ENCODE measurements at regions of chr2 and their contacts with region 1.

Region 1: GRCh38 chr2:19120941-19121750 is 237.3 kb downstream of the OSR1 start:
- DNase-seq: no peak
- H3K4me3 ChIP-seq: no peak overlapping the region
- H3K27ac ChIP-seq: peak overlapping the region; percentile 34
- H3K27me3 ChIP-seq: peaks cover 3% of the 10 kb centered on the region
- CTCF ChIP-seq: no peak

Region 2: DNA sequence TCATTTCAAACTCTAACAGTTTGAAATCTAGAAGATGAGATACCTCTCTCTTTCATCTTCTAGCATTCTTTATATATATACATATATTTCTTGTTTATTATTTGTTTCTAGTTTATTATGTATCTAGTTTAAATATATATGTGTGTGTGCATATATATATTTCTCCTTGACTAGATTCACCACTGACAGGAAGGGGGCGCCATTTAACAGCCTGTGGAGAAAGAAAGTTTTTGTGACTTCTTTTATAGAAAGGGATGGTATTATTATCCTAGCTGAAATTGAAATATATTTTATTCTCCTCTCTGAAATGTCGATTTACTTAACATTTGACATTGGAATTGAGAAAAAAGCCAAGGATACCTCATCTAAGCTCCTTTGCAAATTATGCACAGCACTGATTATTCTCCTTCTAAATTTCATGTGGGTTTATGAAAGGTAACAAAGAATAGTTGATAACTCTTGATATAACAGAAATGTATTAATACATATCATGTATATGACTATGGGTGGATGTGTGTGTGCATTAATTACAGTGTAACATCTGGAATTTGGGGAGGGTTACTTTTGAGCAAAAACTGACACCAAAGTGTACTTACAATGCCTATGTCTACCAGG is 371.1 kb before region 1 on chr2:
- CTCF ChIA-PET with region 1: interaction called, 12 read pairs
- POLR2A ChIA-PET with region 1: no interaction called
- DNase-seq: no peak
- H3K4me3 ChIP-seq: no peak overlapping the region
- H3K27ac ChIP-seq: no peak overlapping the region
- H3K27me3 ChIP-seq: no peaks in the 10 kb centered on the region
- CTCF ChIP-seq: peak; percentile 84

Region 3: DNA sequence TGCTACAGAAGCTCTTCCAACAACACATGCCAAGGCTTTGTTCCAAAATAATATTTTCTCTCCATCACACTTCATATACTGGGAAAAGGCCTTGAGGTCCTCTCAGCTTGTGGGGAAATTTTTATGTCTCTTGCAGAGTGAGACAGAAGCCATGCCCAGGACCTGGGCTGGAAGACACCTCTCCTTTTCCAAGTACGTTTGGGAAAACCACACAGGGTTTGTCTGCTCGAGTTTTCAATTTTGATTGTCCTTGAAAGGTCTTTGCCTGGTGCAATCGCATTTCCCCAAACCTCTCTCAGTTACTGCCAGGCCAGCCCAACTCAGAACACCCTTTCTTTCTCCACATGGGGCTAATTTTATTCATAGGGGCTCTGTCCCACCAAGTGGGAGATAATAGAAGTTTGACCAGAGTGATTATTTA is 34.9 kb before region 1 on chr2:
- CTCF ChIA-PET with region 1: no interaction called
- POLR2A ChIA-PET with region 1: no interaction called
- DNase-seq: no peak
- H3K4me3 ChIP-seq: no peak overlapping the region
- H3K27ac ChIP-seq: no peak overlapping the region
- H3K27me3 ChIP-seq: no peaks in the 10 kb centered on the region
- CTCF ChIP-seq: no peak

Measured in AG04450 (cell line).